CD4-positive, alpha-beta T cell (primary cell): ENCODE measurements at regions of chr2 and their contacts with region 1.

Region 1: GRCh38 chr2:218568190-218569037 is at the starts of genes CNOT9 and USP37:
- DNase-seq: peak; percentile 99 to 100 (median 100)
- ATAC-seq: peak; percentile 85
- H3K4me3 ChIP-seq: peak within 1 kb of the TSS; percentile 77
- H3K4me3 Mint-ChIP-seq: peak within 1 kb of the TSS; percentile 96
- H3K27ac ChIP-seq: peak within 1 kb of the TSS; percentile 98 to 99
- H3K27ac Mint-ChIP-seq: peak within 1 kb of the TSS; percentile 97
- H3K4me1 ChIP-seq: peaks cover 32% of the 10 kb centered on the region
- H3K4me1 Mint-ChIP-seq: peaks cover 77% of the 10 kb centered on the region
- H3K27me3 ChIP-seq: no peaks in the 10 kb centered on the region
- H3K27me3 Mint-ChIP-seq: no peaks in the 10 kb centered on the region
- CTCF ChIP-seq: no peak
- total RNA-seq, gene CNOT9: 62.8 to 66.8 TPM
- total RNA-seq, gene USP37: 20.2 to 24.4 TPM

Region 2: DNA sequence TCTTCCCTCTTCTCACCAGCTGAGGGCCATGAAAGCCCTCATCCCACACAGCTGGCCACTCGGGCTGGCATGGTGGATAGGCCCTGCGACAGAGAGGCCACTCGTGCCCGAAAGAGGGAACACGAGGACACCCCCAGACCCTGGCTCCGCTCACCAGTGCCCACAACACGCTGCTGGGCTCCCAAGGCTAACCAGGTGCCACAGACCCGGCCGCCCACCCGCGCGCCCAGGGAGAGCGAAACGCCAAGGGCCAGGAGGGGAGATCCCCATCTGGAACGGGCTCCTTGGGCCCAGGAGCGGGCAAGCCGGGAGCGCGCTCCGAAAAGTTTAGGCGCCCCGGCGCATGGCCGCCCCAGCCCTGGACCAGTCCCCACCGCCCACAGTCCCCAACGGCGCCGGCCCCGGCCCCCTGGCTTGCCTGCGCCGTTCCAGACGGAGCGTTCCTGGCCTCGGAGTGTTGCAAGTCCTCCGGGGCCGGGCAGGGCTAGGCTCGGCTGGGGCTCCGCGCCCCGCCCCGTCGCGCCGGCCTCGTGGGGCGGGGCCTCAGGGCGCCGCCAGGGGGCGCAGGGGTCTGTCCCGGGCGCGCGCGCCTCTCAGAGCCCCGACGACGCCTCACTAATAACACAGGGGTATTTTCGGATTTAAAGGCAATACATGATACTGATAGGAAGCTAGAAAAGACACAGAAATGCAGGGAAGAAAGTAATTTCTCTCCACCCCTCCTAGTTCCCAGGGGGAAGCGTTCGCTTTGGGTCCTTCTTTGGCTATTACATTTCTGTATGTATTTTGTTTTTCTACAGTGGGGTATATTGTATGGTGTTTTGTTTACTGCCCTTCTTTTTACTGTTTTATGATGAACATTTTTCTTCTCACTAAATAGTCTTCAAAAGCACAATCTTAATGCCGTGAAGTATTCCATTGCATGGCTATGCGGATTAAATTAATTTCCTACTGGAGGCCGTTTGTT is 276.1 kb before region 1 on chr2 and contains the start of gene TMBIM1:
- CTCF ChIA-PET with region 1: interaction called, 3 read pairs
- POLR2A ChIA-PET with region 1: interaction called, 4 read pairs
- intact Hi-C with region 1: loop called in 1 of 2 experiments (anchors 5 kb)
- DNase-seq: peak; percentile 62 to 92 (median 76)
- ATAC-seq: peak; percentile 76
- H3K4me3 ChIP-seq: peak within 1 kb of the TSS; percentile 99
- H3K4me3 Mint-ChIP-seq: peak within 1 kb of the TSS; percentile 95
- H3K27ac ChIP-seq: peak within 1 kb of the TSS; percentile 89 to 96
- H3K27ac Mint-ChIP-seq: peak within 1 kb of the TSS; percentile 99
- H3K4me1 ChIP-seq: peaks cover 73% of the 10 kb centered on the region
- H3K4me1 Mint-ChIP-seq: peaks cover 62% of the 10 kb centered on the region
- H3K27me3 ChIP-seq: no peaks in the 10 kb centered on the region
- H3K27me3 Mint-ChIP-seq: no peaks in the 10 kb centered on the region
- CTCF ChIP-seq: peak; percentile 59
- total RNA-seq, gene TMBIM1: 99.2 to 102 TPM

Region 3: DNA sequence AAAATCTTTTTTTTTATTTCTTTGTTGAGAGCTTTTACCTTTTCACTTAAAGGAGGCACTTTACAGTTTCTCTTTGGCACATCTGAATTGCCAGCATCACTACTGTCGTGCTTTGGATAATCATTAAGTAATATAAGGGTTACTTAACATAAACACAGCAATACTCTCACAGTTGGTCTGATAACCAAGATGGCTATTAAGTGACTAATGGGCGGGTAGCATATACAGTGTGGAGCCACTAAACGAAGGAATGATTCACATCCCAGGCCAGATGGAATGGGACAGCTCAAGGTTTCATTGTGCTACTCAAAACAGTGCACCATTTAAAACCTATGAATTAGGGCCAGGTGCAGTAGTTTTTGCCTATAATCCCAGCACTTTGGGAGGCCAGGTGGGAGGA is 28.4 kb before region 1 on chr2:
- CTCF ChIA-PET with region 1: no interaction called
- POLR2A ChIA-PET with region 1: no interaction called
- intact Hi-C with region 1: no loop called
- DNase-seq: no peak
- ATAC-seq: no peak
- H3K4me3 ChIP-seq: no peak overlapping the region
- H3K4me3 Mint-ChIP-seq: no peak overlapping the region
- H3K27ac ChIP-seq: no peak overlapping the region
- H3K27ac Mint-ChIP-seq: no peak overlapping the region
- H3K4me1 ChIP-seq: no peaks in the 10 kb centered on the region
- H3K4me1 Mint-ChIP-seq: no peaks in the 10 kb centered on the region
- H3K27me3 ChIP-seq: no peaks in the 10 kb centered on the region
- H3K27me3 Mint-ChIP-seq: no peaks in the 10 kb centered on the region
- CTCF ChIP-seq: no peak

Region 4: GRCh38 chr2:218648088-218648786 is 79.8 kb after region 1 on chr2:
- CTCF ChIA-PET with region 1: no interaction called
- POLR2A ChIA-PET with region 1: no interaction called
- intact Hi-C with region 1: no loop called
- DNase-seq: peak; percentile 25 to 77 (median 42)
- ATAC-seq: peak; percentile 92
- H3K4me3 ChIP-seq: no peak overlapping the region
- H3K4me3 Mint-ChIP-seq: no peak overlapping the region
- H3K27ac ChIP-seq: no peak overlapping the region
- H3K27ac Mint-ChIP-seq: no peak overlapping the region
- H3K4me1 ChIP-seq: peaks cover 8% of the 10 kb centered on the region
- H3K4me1 Mint-ChIP-seq: peaks cover 6% of the 10 kb centered on the region
- H3K27me3 ChIP-seq: no peaks in the 10 kb centered on the region
- H3K27me3 Mint-ChIP-seq: no peaks in the 10 kb centered on the region
- CTCF ChIP-seq: peak; percentile 79

Region 5: DNA sequence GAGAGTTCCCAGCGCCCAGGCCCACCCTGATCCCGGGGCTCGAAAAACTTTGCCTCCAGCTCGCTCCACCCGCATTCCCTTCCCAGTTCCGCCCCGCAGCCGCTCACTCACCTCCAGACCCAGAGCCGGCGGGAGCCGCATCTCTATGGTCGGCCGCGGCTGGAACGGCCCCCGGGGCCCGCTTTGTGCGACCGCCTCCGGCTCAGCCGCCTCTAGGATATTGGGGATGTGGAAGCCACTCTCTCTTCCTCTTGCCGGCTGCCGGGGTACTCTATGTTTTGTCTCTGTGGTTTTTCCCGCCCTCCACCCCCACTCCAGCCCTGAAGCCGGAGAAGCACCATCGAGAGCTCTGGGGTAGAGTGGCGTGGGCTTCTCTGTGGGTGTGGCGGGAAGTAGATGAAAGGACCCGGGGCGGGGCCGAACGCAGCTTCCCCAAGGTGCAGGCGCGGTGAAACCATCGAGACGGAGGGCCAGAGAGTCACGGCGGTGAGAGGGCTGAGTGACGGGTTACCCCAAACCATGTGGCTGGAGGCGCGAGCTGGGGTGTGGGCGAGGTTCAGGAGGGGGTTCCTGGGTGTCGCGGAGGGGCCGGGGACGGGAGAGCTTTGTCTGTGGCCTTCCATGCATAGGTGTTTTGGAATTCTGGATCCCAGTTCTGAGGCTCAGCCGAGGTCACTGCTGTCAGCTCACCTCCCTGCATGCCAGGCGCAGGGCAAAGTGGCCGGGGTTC is 91.0 kb after region 1 on chr2 and contains the starts of genes BCS1L and ZNF142:
- CTCF ChIA-PET with region 1: interaction called, 4 read pairs
- POLR2A ChIA-PET with region 1: no interaction called
- intact Hi-C with region 1: loop called in 1 of 2 experiments (anchors 5 kb)
- DNase-seq: peak; percentile 82 to 95 (median 92)
- ATAC-seq: peak; percentile 98
- H3K4me3 ChIP-seq: peak within 1 kb of the TSS; percentile 79
- H3K4me3 Mint-ChIP-seq: peak within 1 kb of the TSS; percentile 95
- H3K27ac ChIP-seq: peak within 1 kb of the TSS; percentile 53 to 83
- H3K27ac Mint-ChIP-seq: peak within 1 kb of the TSS; percentile 89
- H3K4me1 ChIP-seq: peaks cover 19% of the 10 kb centered on the region
- H3K4me1 Mint-ChIP-seq: peaks cover 35% of the 10 kb centered on the region
- H3K27me3 ChIP-seq: no peaks in the 10 kb centered on the region
- H3K27me3 Mint-ChIP-seq: no peaks in the 10 kb centered on the region
- CTCF ChIP-seq: no peak
- total RNA-seq, gene BCS1L: 11.4 to 12.7 TPM
- total RNA-seq, gene ZNF142: 40.3 to 44.2 TPM

Region 6: GRCh38 chr2:218710687-218711549 is 142.5 kb after region 1 on chr2 and contains the start of gene TTLL4:
- CTCF ChIA-PET with region 1: interaction called, 3 read pairs
- POLR2A ChIA-PET with region 1: no interaction called
- intact Hi-C with region 1: loop called (anchors 1 to 5 kb)
- DNase-seq: peak; percentile 97 to 99 (median 99)
- ATAC-seq: peak; percentile 98
- H3K4me3 ChIP-seq: peak within 1 kb of the TSS; percentile 96
- H3K4me3 Mint-ChIP-seq: peak within 1 kb of the TSS; percentile 99
- H3K27ac ChIP-seq: peak within 1 kb of the TSS; percentile 66 to 87
- H3K27ac Mint-ChIP-seq: peak within 1 kb of the TSS; percentile 91
- H3K4me1 ChIP-seq: peaks cover 22% of the 10 kb centered on the region
- H3K4me1 Mint-ChIP-seq: peaks cover 26% of the 10 kb centered on the region
- H3K27me3 ChIP-seq: peaks cover 0 to 6% of the 10 kb centered on the region in 2 experiments
- H3K27me3 Mint-ChIP-seq: peaks cover 10% of the 10 kb centered on the region
- CTCF ChIP-seq: peak; percentile 87
- total RNA-seq, gene TTLL4: 7.3 to 10.8 TPM

Region 7: GRCh38 chr2:219543601-219544358 is 975.4 kb after region 1 on chr2 and contains the starts of genes CHPF and TMEM198:
- CTCF ChIA-PET with region 1: no interaction called
- POLR2A ChIA-PET with region 1: no interaction called
- intact Hi-C with region 1: loop called in 1 of 2 experiments (anchors 10 kb)
- DNase-seq: peak; percentile 83 to 97 (median 90)
- ATAC-seq: peak; percentile 69
- H3K4me3 ChIP-seq: peak within 1 kb of the TSS; percentile 72
- H3K4me3 Mint-ChIP-seq: peak within 1 kb of the TSS; percentile 86
- H3K27ac ChIP-seq: peak within 1 kb of the TSS; percentile 54 to 60
- H3K27ac Mint-ChIP-seq: peak within 1 kb of the TSS; percentile 75
- H3K4me1 ChIP-seq: peaks cover 32% of the 10 kb centered on the region
- H3K4me1 Mint-ChIP-seq: peaks cover 22% of the 10 kb centered on the region
- H3K27me3 ChIP-seq: no peaks in the 10 kb centered on the region
- H3K27me3 Mint-ChIP-seq: peaks cover 7% of the 10 kb centered on the region
- CTCF ChIP-seq: no peak
- total RNA-seq, gene CHPF: 6.5 to 7.1 TPM
- total RNA-seq, gene TMEM198: 0.47 to 0.91 TPM